PC-9 (cell line): ENCODE measurements at regions of chr4 and their contacts with region 1.

Region 1: DNA sequence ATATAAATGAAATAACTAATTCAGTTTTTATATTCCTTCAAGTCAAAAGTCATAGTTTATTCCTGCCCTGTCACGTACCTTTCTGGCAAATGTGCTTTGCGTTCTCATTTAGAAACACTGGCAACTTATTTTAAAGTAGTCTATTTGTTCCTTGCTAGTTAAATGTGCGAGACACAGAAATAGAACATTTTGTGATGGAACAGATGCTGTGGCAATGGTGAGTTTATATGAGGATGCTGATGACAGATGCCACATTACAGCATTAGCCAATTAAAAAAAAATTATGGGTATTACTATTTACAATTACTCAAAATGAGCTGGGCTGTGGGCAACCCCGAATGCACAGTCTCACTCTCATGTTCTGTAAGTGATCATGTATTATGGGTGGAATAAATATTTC is 26.1 kb upstream of the EPHA5 start:
- DNase-seq: no peak
- H3K4me3 ChIP-seq: no peak overlapping the region
- H3K27ac ChIP-seq: no peak overlapping the region
- H3K4me1 ChIP-seq: no peaks in the 10 kb centered on the region
- H3K27me3 ChIP-seq: no peaks in the 10 kb centered on the region
- CTCF ChIP-seq: no peak

Region 2: DNA sequence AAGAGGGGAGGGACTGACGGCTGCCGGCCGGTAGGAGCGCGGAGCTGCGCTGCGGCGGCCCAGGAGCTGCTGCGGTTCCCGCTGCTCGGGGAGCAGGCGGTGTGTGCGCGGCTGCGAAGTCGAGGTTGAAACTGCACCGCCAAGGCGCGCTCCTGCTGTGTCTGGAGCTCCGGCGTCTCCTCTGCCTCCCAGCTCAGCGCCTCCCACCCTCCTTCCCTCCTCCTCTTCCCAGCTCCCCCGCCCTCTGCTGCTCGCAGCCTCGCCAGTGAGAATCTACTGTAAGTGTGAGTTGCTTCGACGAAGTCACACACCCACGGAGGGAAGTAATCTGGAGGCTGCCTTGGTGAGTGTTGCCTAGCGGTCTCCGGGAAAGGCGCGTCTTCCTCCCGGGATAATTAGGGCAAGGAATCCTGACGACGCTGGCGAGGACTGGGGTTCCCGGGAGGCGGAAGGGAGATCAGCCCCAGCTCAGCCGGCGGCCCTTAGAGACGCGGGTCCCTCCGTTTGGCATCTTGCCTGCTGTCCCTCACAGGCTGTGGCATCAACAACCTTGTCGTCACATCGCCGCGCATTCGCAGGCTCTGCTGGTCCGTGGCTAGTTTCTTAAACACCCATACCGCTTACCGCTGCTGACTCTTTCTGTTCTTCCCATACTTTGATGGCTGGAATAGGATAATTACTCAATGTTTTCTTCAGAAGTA is 26.0 kb before region 1 on chr4 and contains the start of gene EPHA5:
- CTCF ChIA-PET with region 1: no interaction called
- POLR2A ChIA-PET with region 1: interaction called, 14 read pairs
- intact Hi-C with region 1: no loop called
- DNase-seq: peak in 1 of 2 experiments; percentile 55
- H3K4me3 ChIP-seq: peak within 1 kb of the TSS; percentile 39; the same call in 1 of the 2 replicates
- H3K27ac ChIP-seq: no peak within 1 kb of the TSS
- H3K4me1 ChIP-seq: no peaks in the 10 kb centered on the region
- H3K27me3 ChIP-seq: no peaks in the 10 kb centered on the region
- CTCF ChIP-seq: no peak
- total RNA-seq, gene EPHA5: not detected in 2 replicates